GM13977 (cell line): ENCODE measurements at regions of chr3 and their contacts with region 1.

Region 1: DNA sequence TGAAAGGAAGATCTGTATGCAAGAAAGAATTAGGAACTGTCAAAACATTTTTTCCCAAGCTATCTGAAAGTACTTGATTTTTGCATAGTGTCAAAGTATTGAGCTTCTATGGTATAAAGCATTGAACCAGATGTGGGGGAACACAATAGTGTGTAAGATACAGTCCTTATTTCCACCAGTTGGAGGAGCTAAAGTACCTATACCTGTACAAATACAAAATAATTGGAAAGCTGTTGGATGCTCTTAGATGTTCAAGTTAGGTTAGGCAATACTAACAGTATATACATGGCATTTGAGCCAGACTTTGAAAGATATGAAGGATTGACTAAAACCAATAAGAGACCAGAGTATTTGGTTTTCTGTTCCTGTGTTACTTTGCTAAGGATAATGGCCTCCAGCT is 148.3 kb downstream of the B3GALNT1 start:
- DNase-seq: peak; percentile 39
- CTCF ChIP-seq: peak; percentile 67

Region 2: DNA sequence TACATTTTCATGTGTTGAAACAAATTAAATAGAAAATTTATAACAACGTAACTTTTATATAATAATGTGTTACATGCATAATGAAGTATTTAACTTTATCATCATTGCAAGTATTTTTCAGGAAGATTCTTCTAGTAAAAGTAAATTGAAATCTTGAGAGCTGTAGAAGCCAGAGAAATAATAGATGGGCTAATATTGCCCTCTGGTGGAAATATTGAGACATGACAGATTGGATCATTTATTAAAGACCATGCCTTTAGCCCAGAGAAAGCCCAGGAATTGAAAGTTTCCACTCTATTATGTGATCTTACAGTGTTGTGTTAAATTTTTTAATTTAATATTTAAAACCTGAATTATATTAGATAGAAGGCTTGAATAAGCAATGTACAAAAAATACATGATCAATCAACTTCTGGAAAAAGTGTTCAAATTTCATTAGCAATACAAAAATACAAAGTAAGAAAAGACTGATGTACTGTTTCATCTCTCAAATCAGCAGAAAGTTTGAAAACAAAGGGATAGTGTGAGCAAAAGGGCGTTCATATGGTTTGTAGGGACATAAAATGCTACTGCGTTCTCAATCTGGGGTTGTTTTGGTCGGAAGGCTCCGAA is 467.2 kb after region 1 on chr3:
- in situ Hi-C with region 1: loop called (anchors 25 kb)
- DNase-seq: peak; percentile 50
- CTCF ChIP-seq: peak; percentile 56